Mammary epithelial cell (primary cell): ENCODE measurements at regions of chr7 and their contacts with region 1.

Region 1: GRCh38 chr7:45902820-45903219 is 14.5 kb downstream of the IGFBP1 start:
- DNase-seq: no peak
- H3K4me3 ChIP-seq: no peak overlapping the region
- H3K27ac ChIP-seq: no peak overlapping the region
- H3K4me1 ChIP-seq: no peaks in the 10 kb centered on the region
- H3K27me3 ChIP-seq: peaks cover 2% of the 10 kb centered on the region
- CTCF ChIP-seq: no peak

Region 2: DNA sequence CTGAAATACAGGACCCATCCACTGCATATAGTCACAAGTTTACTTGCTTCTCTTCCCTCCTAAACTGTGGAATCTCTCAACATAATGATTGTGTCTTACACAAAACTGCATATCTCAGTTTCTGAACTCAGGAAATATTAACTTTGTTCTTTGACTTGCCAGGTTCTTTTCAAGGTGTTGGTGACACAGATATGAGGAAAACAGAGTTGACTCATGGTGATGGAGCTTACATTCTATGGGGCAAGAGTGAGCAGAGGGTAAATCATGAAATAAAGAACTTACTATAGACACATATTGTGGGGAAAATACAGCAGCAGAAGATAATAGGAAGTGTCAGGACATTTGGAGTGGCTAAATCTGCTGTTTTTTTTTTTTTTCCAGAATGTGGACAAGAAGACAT is 90.8 kb after region 1 on chr7:
- CTCF ChIA-PET with region 1: interaction called, 15 read pairs
- dilution Hi-C with region 1: no loop called
- in situ Hi-C with region 1: no loop called
- intact Hi-C with region 1: no loop called
- DNase-seq: peak; percentile 39
- H3K4me3 ChIP-seq: no peak overlapping the region
- H3K27ac ChIP-seq: no peak overlapping the region
- H3K4me1 ChIP-seq: peaks cover 3% of the 10 kb centered on the region
- H3K27me3 ChIP-seq: no peaks in the 10 kb centered on the region
- CTCF ChIP-seq: no peak